HEK293T (cell line): ENCODE measurements at regions of chr2 and their contacts with region 1.

Region 1: GRCh38 chr2:118088051-118089024 is at the start of gene INSIG2:
- DNase-seq: peak; percentile 94

Region 2: GRCh38 chr2:118186110-118186857 is 97.9 kb after region 1 on chr2:
- CTCF ChIA-PET with region 1: no interaction called
- POLR2A ChIA-PET with region 1: interaction called, 14 read pairs
- DNase-seq: peak; percentile 89

Region 3: DNA sequence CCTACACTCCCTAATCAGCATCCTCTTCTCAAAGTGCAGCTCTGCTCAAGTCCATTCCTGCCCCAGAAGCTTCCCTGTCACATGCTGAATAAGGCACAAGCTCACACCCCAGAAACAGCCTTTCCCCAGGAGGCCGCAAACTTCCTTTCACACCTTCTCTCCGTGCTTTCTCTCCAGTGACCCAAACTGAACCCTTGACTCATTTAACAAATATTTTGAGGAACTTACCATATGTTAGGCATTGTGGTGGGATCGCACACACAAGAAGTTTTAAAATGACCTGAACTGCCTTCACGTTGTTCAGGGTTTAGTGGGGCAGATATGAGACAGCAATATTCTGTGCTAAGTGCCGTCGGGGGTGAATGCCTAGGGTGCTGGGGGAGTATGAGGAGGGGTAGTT is 161.2 kb after region 1 on chr2:
- CTCF ChIA-PET with region 1: no interaction called
- POLR2A ChIA-PET with region 1: no interaction called
- DNase-seq: no peak